Posterior vena cava (tissue), 2 donors: ENCODE measurements at regions of chr10 and their contacts with region 1.

Region 1: GRCh38 chr10:72331601-72332422 is 22.9 kb downstream of the DNAJB12 start:
- DNase-seq: peak; percentile 95

Region 2: GRCh38 chr10:71957546-71958275 is 374.1 kb before region 1 on chr10:
- intact Hi-C with region 1: loop called (anchors 10 kb)
- DNase-seq: no peak

Region 3: GRCh38 chr10:71963756-71964668 is 367.8 kb before region 1 on chr10 and contains the start of gene CHST3:
- intact Hi-C with region 1: loop called (anchors 10 kb)
- DNase-seq: peak; percentile 91
- total RNA-seq, gene CHST3: 34.9 to 37.7 TPM

Region 4: GRCh38 chr10:72048450-72049124 is 283.2 kb before region 1 on chr10:
- intact Hi-C with region 1: loop called in 1 of 2 experiments (anchors 5 kb)
- DNase-seq: peak; percentile 96

Region 5: GRCh38 chr10:72215652-72216549 is 115.9 kb before region 1 on chr10 and contains the starts of genes ANAPC16 and ASCC1:
- intact Hi-C with region 1: loop called (anchors 10 kb)
- DNase-seq: peak; percentile 97
- total RNA-seq, gene ANAPC16: 77.4 to 95.3 TPM
- total RNA-seq, gene ASCC1: 28.3 to 37.7 TPM

Region 6: GRCh38 chr10:72223743-72224101 is 108.1 kb before region 1 on chr10:
- intact Hi-C with region 1: loop called (anchors 10 kb)
- DNase-seq: no peak

Region 7: DNA sequence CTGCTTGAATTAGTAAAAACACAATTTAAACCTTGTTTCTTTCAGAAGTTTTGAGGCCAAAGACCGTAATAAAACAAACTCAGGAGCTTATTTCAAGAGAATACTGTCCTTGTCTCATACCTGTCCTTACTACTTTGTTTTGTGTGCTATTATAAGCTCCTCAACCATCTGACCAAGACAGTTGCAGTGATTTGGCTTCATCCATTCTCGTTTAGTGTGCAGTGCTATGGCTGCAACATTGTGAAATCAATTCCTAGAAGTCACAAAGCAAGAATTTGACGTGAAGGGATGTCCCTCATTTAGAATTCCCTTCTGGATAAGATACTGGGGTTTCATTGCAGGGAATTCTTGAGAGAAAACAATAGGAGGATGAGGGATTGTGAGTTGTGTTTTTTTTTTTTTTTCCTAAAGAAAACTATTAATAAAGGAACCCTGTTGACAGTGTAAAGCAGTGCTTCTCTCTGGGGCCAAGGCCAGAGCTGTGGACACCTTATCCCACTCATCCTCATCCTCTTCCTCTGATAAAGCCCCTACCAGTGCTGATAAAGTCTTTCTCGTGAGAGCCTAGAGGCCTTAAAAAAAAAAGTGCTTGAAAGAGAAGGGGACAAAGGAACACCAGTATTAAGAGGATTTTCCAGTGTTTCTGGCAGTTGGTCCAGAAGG is 561.5 kb after region 1 on chr10 and contains the start of gene OIT3:
- intact Hi-C with region 1: no loop called
- DNase-seq: no peak
- total RNA-seq, gene OIT3: not detected